HEK293T (cell line): ENCODE measurements at regions of chr15 and their contacts with region 1.

Region 1: GRCh38 chr15:82108489-82109078 is 62.8 kb upstream of the MEX3B start:
- DNase-seq: peak; percentile 86

Region 2: DNA sequence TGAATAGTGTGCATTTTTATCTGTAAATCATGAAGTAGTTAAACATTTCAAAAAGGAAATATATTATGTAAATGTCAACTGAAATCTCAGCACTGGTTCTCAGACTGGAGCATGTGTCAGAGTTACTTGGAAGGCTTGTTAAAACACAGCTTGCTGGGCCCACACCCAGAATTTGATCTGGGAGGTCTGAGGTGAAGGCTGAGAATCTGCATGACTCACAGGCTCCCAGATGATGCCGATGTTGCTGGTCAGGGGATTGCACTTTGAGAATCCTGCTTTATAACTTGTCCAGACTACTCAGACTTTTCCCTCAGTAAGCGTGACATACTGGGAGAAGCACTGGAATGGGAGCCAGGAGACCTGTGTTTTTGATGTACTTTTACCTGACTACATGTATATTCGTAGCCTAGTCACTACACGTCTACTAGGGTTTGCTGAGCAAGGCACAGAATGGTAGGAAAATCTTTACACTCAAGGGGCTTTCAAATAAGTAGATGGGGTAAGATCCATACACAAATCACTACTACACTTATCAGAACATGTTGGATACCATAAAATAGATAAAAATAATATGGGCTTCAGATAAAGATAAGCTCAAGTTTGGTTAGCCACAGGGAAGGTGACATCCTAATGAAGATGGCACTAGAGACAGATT is 14.3 kb after region 1 on chr15:
- CTCF ChIA-PET with region 1: interaction called, 15 read pairs
- POLR2A ChIA-PET with region 1: no interaction called
- DNase-seq: no peak

Region 3: GRCh38 chr15:82135638-82136037 is 27.1 kb after region 1 on chr15:
- CTCF ChIA-PET with region 1: interaction called, 12 read pairs
- POLR2A ChIA-PET with region 1: no interaction called
- DNase-seq: no peak